Posterior vena cava (tissue), 2 donors: ENCODE measurements at regions of chr22 and their contacts with region 1.

Region 1: DNA sequence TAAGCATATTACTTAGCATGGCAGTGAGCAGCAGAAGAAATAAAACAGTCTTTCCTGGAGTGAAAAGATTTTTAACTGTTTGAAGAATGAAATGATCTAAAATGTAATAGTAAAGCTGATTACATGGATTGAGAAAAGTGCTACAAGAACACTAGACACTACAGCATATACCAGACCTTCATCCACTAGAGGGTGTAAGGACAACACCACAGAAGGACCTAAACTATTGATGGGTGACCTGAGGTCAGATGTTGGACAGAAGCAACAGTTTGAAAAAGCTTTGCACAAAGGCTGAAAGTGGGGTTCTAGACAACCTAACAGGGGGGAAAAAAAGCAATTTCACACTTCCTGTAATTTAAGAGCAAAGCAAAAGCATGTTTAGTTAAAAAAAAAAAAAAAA is 97.7 kb downstream of the RBFOX2 start:
- DNase-seq: no peak

Region 2: GRCh38 chr22:36065775-36066559 is 135.0 kb after region 1 on chr22:
- intact Hi-C with region 1: loop called (anchors 5 kb)
- DNase-seq: peak; percentile 97

Region 3: GRCh38 chr22:36073476-36073875 is 142.5 kb after region 1 on chr22:
- intact Hi-C with region 1: loop called (anchors 5 kb)
- DNase-seq: no peak